Dendritic cell treated with granulocyte-macrophage colony-stimulating factor and Interleukin-4, amounts not matched to agents 40 ng/mL and 50 ng/mL, for 4 days (primary cell): ENCODE measurements at regions of chr1 and their contacts with region 1.

Region 1: DNA sequence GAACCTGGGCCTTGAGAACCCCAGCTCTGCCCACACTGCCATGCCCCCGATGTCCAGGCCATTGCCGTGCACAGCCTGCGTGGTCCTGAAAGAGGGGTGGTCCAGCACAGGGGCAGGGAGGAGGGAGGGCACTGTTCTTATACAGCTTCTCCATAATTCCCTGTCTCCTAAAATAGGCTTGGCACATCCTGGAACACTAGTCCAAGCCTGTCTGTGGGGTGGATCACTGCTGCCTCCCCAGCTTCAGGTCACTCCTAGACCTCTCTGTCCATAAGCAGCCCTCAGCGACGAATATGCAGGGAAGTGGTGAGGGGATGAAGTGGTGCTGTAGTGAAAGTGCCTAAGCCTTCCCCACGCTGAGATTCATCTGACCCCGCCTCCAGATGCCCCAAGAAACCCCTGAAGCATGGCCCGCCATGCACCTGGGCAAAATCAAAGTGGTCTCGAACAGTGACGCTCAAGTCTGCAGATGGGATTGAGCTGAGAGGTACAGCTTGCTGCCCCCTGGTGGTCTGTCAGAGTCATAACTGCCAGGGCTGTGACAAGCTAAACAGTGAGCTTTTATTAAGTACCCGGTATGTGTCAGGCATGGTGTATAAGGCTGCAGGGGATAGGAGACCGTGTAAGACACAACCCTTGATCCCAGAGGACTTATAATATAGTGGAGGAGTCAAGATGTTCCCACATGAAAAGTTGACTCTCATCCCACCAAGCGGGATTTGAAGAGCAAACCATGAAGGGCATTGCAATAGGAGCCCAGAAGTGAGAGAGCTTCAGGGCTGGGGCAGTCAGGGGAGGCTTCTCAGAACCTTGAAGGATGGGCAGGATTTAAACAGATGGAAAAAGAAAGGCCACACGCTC is 66.6 kb downstream of the FAM163A start:
- H3K4me3 Mint-ChIP-seq: no peak overlapping the region
- H3K27ac Mint-ChIP-seq: no peak overlapping the region
- H3K4me1 Mint-ChIP-seq: peaks cover 7% of the 10 kb centered on the region
- H3K27me3 Mint-ChIP-seq: peaks cover 22% of the 10 kb centered on the region

Region 2: DNA sequence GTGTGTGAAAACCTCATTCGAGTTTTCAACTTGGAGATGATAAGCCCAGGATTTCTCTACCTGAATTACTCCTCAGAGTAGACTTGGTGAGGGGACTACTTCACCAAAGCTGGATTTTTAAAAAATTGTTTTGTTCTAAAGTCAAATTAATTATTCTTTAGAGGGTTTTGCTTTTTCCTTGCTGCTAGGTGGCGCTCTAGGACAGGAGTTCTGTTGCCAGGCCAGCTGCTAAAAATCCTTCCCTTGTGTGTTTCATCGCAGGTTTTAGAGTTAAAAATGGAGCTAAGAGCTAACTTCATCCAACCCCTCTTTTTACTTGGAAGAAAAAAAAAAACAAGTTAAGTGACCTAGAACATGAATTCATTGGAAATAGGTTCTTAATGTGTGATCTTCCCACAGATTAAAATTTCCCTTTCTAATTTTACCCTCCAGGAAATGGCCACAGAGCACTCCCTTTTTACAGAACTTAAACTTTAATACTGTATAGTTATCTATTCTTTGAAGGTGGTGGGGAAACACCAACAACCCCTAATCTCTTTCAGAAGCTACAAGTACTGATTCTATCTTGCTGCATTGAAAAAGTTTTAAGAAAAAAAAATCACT is 103.3 kb before region 1 on chr1:
- intact Hi-C with region 1: loop called (anchors 1 kb)
- H3K4me3 Mint-ChIP-seq: no peak overlapping the region
- H3K27ac Mint-ChIP-seq: no peak overlapping the region
- H3K4me1 Mint-ChIP-seq: no peaks in the 10 kb centered on the region
- H3K27me3 Mint-ChIP-seq: no peaks in the 10 kb centered on the region

Region 3: DNA sequence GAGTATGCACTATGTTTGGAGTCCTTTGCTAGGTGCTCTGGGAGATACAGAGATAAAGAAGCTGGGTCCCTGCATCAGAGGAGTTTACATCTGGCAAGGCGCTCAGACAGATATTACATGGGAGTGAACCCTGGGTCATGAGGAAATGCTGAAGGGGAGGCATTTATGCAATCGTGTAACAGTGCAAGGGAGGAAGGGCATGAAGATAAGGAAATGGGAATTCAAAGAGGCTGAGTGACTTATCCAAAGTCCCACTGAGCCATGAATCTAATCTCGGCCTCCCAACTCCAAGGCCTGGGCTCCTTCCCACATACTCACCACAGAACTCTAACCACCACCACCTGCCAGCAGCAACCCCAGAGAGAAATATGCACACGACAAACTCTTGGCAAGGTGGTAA is 15.1 kb before region 1 on chr1:
- intact Hi-C with region 1: no loop called
- H3K4me3 Mint-ChIP-seq: no peak overlapping the region
- H3K27ac Mint-ChIP-seq: no peak overlapping the region
- H3K4me1 Mint-ChIP-seq: peaks cover 7% of the 10 kb centered on the region
- H3K27me3 Mint-ChIP-seq: peaks cover 1% of the 10 kb centered on the region

Region 4: DNA sequence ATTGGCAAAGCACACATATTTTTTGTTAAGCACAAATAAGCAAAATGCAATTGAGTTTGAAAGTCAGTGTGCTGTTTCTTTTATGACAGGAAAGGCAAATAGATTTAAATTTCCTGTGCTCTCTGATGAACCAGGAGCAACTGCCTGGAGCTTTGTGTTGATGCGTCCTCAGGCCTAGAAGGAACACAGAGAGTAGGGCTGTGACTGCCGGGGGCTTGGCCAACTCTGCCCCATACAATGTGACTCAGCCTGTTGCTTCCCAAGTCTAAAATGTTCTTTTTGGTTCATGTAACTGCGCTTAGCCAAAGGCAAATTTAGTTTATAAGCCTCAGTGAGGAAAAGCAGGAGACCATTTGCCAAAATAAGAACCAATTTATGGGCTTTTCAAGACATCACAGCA is 30.4 kb after region 1 on chr1:
- intact Hi-C with region 1: no loop called
- H3K4me3 Mint-ChIP-seq: no peak overlapping the region
- H3K27ac Mint-ChIP-seq: no peak overlapping the region
- H3K4me1 Mint-ChIP-seq: no peaks in the 10 kb centered on the region
- H3K27me3 Mint-ChIP-seq: no peaks in the 10 kb centered on the region